AG04450 (cell line): ENCODE measurements at regions of chr19 and their contacts with region 1.

Region 1: DNA sequence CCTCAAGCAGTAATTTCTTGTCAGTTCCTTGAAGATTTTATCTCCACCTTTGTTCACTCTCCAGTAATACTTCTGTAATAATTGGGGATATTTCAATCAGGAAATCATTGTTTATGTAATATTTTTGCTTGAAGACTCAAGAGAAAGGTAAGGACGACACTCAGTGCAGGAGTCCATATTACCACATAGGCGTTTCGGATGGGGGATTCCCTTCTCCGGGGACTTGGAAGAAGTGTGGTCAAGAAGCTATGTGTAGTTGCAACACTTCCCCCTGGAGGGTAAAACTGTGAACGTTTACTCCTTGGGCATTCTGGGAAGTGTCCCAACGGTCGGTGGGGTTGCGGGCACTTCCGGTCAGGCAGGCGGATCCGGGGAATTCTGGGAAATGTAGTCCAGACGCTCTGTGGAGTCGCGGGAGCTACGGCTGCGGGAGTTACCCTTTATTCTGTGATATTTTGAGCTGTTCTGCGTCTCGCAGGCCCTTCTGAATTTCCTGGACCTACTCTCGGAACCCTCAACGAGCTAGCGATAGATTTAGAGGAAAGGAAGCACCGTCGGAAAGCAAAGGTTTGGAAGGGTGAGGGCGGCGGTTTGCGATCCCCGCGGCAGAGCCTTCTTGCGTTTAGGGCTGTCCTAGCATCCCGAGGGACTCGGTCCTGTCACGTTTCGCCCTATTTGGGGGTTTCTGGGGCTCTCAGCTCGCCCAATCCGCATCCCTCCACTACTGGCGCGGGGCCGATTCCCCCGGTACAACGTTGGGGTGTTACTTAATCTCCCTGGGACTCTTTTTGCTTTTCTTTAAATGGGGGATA is at the start of gene ZNF221:
- DNase-seq: peak; percentile 95
- H3K4me3 ChIP-seq: peak within 1 kb of the TSS; percentile 92
- H3K27ac ChIP-seq: peak within 1 kb of the TSS; percentile 82
- H3K27me3 ChIP-seq: no peaks in the 10 kb centered on the region
- CTCF ChIP-seq: peak; percentile 51
- polyA plus RNA-seq, gene ZNF221: 2.5 and 3.0 TPM in 2 replicates

Region 2: GRCh38 chr19:43855616-43856015 is 95.4 kb before region 1 on chr19:
- CTCF ChIA-PET with region 1: no interaction called
- POLR2A ChIA-PET with region 1: no interaction called
- DNase-seq: no peak
- H3K4me3 ChIP-seq: no peak overlapping the region
- H3K27ac ChIP-seq: no peak overlapping the region
- H3K27me3 ChIP-seq: no peaks in the 10 kb centered on the region
- CTCF ChIP-seq: no peak

Region 3: GRCh38 chr19:43934985-43935708 is 15.9 kb before region 1 on chr19 and contains the start of gene ZNF45:
- CTCF ChIA-PET with region 1: interaction called, 4 read pairs
- POLR2A ChIA-PET with region 1: interaction called, 12 read pairs
- DNase-seq: peak; percentile 60
- H3K4me3 ChIP-seq: peak within 1 kb of the TSS; percentile 77
- H3K27ac ChIP-seq: peak within 1 kb of the TSS; percentile 65
- H3K27me3 ChIP-seq: no peaks in the 10 kb centered on the region
- CTCF ChIP-seq: no peak
- polyA plus RNA-seq, gene ZNF45: 12.0 and 16.1 TPM in 2 replicates